ENCODE measurements at regions of chr20 and their contacts with region 1.

Region 1: GRCh38 chr20:32091888-32092346 is 17.6 kb upstream of the TM9SF4 start:
- DNase-seq: peak; percentile 93
- ATAC-seq: peak; percentile 98
- H3K4me3 Mint-ChIP-seq: no peak overlapping the region
- H3K27ac Mint-ChIP-seq: no peak overlapping the region
- H3K4me1 Mint-ChIP-seq: no peaks in the 10 kb centered on the region
- H3K27me3 Mint-ChIP-seq: peaks cover 4% of the 10 kb centered on the region
- CTCF ChIP-seq: peak; percentile 97

Region 2: DNA sequence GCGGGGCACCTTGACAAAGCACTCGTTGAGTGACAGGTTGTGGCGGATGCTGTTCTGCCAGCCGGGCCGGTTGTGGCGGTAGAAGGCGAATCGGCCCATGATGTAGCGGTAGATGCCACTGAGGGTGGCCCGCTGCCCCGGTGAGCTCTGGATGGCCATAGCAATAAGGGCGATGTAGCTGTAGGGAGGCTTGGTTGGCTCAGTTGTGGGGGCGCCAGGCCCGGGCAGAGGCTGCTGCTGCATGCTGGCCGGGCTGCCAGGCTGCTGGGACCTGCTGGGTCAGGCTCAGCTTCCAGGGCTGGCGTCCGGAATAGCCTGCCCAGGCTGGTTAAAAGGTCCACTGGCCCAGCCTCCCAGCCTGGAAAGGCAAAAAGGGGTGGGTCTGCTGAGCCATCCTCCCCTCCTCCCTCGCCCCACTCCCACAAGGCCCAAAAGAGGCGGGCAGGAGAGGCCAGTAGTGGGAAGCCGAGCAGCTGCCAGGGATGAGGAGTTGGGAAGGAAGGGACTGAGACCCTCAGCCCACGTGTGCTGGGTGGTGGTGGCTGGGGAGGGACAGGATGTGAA is 246.5 kb before region 1 on chr20 and contains the start of gene FOXS1:
- CTCF ChIA-PET with region 1: interaction called, 10 read pairs
- POLR2A ChIA-PET with region 1: no interaction called
- intact Hi-C with region 1: no loop called
- DNase-seq: no peak
- ATAC-seq: no peak
- H3K4me3 Mint-ChIP-seq: no peak within 1 kb of the TSS
- H3K27ac Mint-ChIP-seq: no peak within 1 kb of the TSS
- H3K4me1 Mint-ChIP-seq: no peaks in the 10 kb centered on the region
- H3K27me3 Mint-ChIP-seq: peaks cover 9% of the 10 kb centered on the region
- CTCF ChIP-seq: no peak
- total RNA-seq, gene FOXS1: not detected

Region 3: DNA sequence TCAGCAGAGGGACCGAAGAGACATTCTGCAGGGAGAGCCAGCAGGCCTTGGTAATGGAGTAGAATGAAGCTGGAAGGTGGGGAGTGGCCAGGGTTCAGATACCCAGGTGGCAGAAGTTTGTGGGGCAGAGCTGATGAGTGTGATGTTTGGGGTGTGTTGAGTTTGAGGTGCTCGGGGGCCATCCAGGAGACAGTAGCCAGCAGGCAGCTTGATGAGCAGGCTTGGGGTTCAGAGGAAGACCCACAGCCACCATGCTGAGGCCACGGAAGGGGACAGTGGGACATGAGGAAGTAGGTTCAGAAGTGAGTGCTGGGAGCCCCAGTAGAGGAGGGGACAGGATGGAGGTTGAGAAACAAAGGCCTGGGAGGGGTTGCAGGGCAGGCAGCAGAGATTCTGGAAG is 235.4 kb before region 1 on chr20:
- CTCF ChIA-PET with region 1: interaction called, 29 read pairs
- POLR2A ChIA-PET with region 1: no interaction called
- intact Hi-C with region 1: no loop called
- DNase-seq: no peak
- ATAC-seq: no peak
- H3K4me3 Mint-ChIP-seq: no peak overlapping the region
- H3K27ac Mint-ChIP-seq: no peak overlapping the region
- H3K4me1 Mint-ChIP-seq: peaks cover 4% of the 10 kb centered on the region
- H3K27me3 Mint-ChIP-seq: peaks cover 22% of the 10 kb centered on the region
- CTCF ChIP-seq: no peak

Region 4: GRCh38 chr20:31923388-31924331 is 168.3 kb before region 1 on chr20:
- CTCF ChIA-PET with region 1: no interaction called
- POLR2A ChIA-PET with region 1: no interaction called
- intact Hi-C with region 1: no loop called
- DNase-seq: peak; percentile 69
- ATAC-seq: peak; percentile 93
- H3K4me3 Mint-ChIP-seq: no peak overlapping the region
- H3K27ac Mint-ChIP-seq: no peak overlapping the region
- H3K4me1 Mint-ChIP-seq: peaks cover 13% of the 10 kb centered on the region
- H3K27me3 Mint-ChIP-seq: peaks cover 26% of the 10 kb centered on the region
- CTCF ChIP-seq: no peak

Region 5: GRCh38 chr20:32031007-32031958 is 60.6 kb before region 1 on chr20:
- CTCF ChIA-PET with region 1: interaction called, 23 read pairs
- POLR2A ChIA-PET with region 1: no interaction called
- intact Hi-C with region 1: no loop called
- DNase-seq: peak; percentile 68
- ATAC-seq: peak; percentile 91
- H3K4me3 Mint-ChIP-seq: no peak overlapping the region
- H3K27ac Mint-ChIP-seq: no peak overlapping the region
- H3K4me1 Mint-ChIP-seq: no peaks in the 10 kb centered on the region
- H3K27me3 Mint-ChIP-seq: peaks cover 16% of the 10 kb centered on the region
- CTCF ChIP-seq: peak; percentile 100